ENCODE measurements at regions of chr9 and their contacts with region 1.

Region 1: GRCh38 chr9:121201738-121202533 is at the start of gene RAB14:
- DNase-seq: peak; percentile 98
- H3K4me3 Mint-ChIP-seq: peak within 1 kb of the TSS; percentile 83
- H3K27ac Mint-ChIP-seq: peak within 1 kb of the TSS; percentile 81
- H3K4me1 Mint-ChIP-seq: peaks cover 26% of the 10 kb centered on the region
- H3K27me3 Mint-ChIP-seq: no peaks in the 10 kb centered on the region
- CTCF ChIP-seq: peak; percentile 47
- total RNA-seq, gene RAB14: 65.8 and 77.0 TPM in 2 replicates

Region 2: GRCh38 chr9:121038804-121039203 is 163.1 kb before region 1 on chr9:
- CTCF ChIA-PET with region 1: no interaction called
- POLR2A ChIA-PET with region 1: no interaction called
- intact Hi-C with region 1: no loop called
- DNase-seq: no peak
- H3K4me3 Mint-ChIP-seq: no peak overlapping the region
- H3K27ac Mint-ChIP-seq: no peak overlapping the region
- H3K4me1 Mint-ChIP-seq: no peaks in the 10 kb centered on the region
- H3K27me3 Mint-ChIP-seq: no peaks in the 10 kb centered on the region
- CTCF ChIP-seq: no peak

Region 3: GRCh38 chr9:121074635-121075385 is 127.1 kb before region 1 on chr9 and contains the start of gene CNTRL:
- CTCF ChIA-PET with region 1: no interaction called
- POLR2A ChIA-PET with region 1: interaction called, 22 read pairs
- intact Hi-C with region 1: loop called (anchors 5 kb)
- DNase-seq: peak; percentile 92
- H3K4me3 Mint-ChIP-seq: peak within 1 kb of the TSS; percentile 92
- H3K27ac Mint-ChIP-seq: peak within 1 kb of the TSS; percentile 91
- H3K4me1 Mint-ChIP-seq: peaks cover 22% of the 10 kb centered on the region
- H3K27me3 Mint-ChIP-seq: no peaks in the 10 kb centered on the region
- CTCF ChIP-seq: no peak
- total RNA-seq, gene CNTRL: 11.6 and 18.9 TPM in 2 replicates

Region 4: GRCh38 chr9:121156263-121156731 is 45.6 kb before region 1 on chr9:
- CTCF ChIA-PET with region 1: interaction called, 4 read pairs
- POLR2A ChIA-PET with region 1: interaction called, 16 read pairs
- intact Hi-C with region 1: no loop called
- DNase-seq: peak; percentile 87
- H3K4me3 Mint-ChIP-seq: peak overlapping the region; percentile 56
- H3K27ac Mint-ChIP-seq: peak overlapping the region; percentile 69
- H3K4me1 Mint-ChIP-seq: peaks cover 20% of the 10 kb centered on the region
- H3K27me3 Mint-ChIP-seq: no peaks in the 10 kb centered on the region
- CTCF ChIP-seq: no peak

Region 5: DNA sequence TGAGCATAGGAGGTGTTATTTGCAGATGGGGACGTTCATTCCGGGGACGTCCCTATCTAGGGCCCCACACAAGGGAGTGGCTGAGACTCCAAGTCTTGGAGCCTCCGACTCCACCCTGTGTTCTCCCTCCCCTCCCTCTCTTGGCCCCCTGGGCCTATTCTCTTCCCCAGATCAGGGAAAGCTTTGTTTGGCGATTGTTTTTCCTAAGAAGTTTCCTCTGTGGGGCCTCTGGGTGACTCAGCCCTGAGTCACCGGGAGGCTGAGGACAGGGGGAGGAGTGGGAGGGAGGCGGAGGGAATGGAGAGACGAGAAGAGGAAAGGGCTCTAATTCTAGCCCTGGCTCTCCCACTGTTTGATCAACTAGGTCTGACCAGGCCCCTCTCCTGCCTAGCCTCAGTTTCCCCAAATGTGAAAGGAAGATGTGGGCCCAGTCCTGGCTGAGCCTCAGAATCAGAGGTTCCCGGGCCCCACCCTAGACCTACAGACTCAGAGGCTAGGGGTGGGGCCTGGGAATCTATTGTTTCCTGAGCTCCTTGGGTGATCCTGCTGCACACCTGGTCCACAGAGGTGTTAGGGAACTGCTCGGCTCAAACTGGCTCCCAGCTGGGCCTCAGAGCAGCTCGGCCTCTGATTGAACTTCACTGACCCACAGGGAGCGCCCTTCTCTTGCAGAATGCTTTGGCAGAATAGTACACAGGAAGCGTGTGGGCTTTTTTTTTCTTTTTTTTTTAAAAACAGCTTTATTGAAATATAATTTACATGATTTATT is 85.2 kb after region 1 on chr9:
- CTCF ChIA-PET with region 1: interaction called, 4 read pairs
- POLR2A ChIA-PET with region 1: interaction called, 19 read pairs
- intact Hi-C with region 1: no loop called
- DNase-seq: peak; percentile 99
- H3K4me3 Mint-ChIP-seq: peak overlapping the region; percentile 32
- H3K27ac Mint-ChIP-seq: peak overlapping the region; percentile 80
- H3K4me1 Mint-ChIP-seq: peaks cover 70% of the 10 kb centered on the region
- H3K27me3 Mint-ChIP-seq: no peaks in the 10 kb centered on the region
- CTCF ChIP-seq: peak; percentile 14

Region 6: DNA sequence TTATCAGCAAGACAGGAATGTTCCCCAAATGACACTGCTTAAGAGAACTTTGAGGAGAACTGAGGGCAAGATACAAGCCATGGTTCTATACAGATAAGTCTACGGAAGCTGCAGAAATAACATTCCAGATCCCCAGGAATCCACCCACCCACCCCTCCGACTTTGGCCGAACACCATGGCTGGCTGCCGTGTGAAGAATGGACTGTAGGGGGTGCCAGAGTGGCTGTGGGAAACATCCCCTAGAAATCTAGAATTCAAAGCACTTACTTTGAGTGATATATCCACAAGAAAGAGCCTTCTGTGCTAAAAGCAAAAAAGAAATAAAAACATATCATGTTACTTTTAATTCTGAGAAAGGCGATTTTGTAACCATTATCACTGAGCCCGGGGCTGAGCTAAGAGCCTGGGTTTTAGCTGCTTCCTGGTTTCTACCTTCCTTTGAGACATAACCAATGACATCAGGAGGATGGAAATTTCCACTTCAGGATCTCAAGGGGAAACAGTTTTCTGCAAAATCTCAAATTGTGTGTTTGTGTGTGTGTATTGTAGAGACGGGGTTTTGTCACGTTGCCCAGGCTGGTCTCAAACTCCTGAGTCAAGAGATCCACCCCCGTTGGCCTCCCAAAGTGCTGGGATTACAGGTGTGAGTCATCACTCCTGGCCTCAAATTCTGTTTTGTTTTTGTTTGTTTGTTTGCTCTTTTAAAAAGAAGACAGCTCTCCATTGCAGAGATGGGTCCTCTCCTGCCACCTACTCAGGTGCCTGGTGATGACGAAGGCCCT is 261.3 kb after region 1 on chr9:
- CTCF ChIA-PET with region 1: no interaction called
- POLR2A ChIA-PET with region 1: no interaction called
- intact Hi-C with region 1: no loop called
- DNase-seq: peak; percentile 45
- H3K4me3 Mint-ChIP-seq: no peak overlapping the region
- H3K27ac Mint-ChIP-seq: no peak overlapping the region
- H3K4me1 Mint-ChIP-seq: no peaks in the 10 kb centered on the region
- H3K27me3 Mint-ChIP-seq: peaks cover 60% of the 10 kb centered on the region
- CTCF ChIP-seq: peak; percentile 45